HEK293T (cell line): ENCODE measurements at regions of chr17 and their contacts with region 1.

Region 1: GRCh38 chr17:77076124-77076872 is 64.5 kb upstream of the SEC14L1 start:
- DNase-seq: no peak

Region 2: GRCh38 chr17:77088455-77089123 is 12.3 kb after region 1 on chr17:
- CTCF ChIA-PET with region 1: interaction called, 10 read pairs
- POLR2A ChIA-PET with region 1: interaction called, 18 read pairs
- DNase-seq: peak; percentile 96

Region 3: DNA sequence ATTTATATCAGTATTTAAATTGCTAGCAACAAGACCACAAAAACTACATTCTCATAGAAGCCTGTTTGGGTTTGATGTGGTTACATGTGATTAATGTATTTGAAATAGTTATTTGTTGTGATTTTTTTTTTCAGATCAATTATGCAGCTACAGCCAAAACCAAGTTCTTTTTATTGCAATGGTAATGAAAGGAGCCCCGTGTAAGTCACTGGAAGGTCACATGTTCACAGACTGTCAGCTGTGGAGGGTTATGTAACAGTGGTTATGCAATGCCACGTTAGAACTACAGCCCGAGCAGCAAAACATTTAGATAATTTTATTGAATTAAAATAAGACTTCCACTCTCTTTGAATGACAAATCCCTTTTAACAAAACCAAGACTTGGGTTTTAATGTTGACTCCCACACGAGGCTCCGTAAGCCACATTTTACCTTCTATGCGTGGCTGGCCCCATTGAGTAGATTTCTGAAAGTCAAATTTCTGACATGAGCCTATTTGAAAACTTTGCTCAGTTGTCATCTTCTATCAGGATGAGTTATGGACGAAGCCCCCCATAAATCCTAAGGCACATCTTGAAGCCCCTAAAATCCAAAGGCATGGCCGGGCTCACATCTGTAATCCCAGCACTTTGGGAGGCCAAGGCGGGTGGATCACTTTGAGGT is 22.7 kb after region 1 on chr17:
- CTCF ChIA-PET with region 1: no interaction called
- POLR2A ChIA-PET with region 1: no interaction called
- DNase-seq: no peak